Pancreas (tissue), 10 donors: ENCODE measurements at regions of chr19 and their contacts with region 1.

Region 1: GRCh38 chr19:8355631-8356402 is 8.1 kb upstream of the ANGPTL4 start:
- DNase-seq: peak in 1 of 6 donors; percentile 9
- ATAC-seq: peak in 3 of 4 donors; percentile 41 to 70 (median 47)
- H3K4me3 ChIP-seq: no peak overlapping the region
- H3K27ac ChIP-seq: no peak overlapping the region
- H3K4me1 ChIP-seq: peaks cover 0 to 3% (median 0%) of the 10 kb centered on the region in 3 donors
- H3K27me3 ChIP-seq: no peaks in the 10 kb centered on the region
- CTCF ChIP-seq: no peak

Region 2: DNA sequence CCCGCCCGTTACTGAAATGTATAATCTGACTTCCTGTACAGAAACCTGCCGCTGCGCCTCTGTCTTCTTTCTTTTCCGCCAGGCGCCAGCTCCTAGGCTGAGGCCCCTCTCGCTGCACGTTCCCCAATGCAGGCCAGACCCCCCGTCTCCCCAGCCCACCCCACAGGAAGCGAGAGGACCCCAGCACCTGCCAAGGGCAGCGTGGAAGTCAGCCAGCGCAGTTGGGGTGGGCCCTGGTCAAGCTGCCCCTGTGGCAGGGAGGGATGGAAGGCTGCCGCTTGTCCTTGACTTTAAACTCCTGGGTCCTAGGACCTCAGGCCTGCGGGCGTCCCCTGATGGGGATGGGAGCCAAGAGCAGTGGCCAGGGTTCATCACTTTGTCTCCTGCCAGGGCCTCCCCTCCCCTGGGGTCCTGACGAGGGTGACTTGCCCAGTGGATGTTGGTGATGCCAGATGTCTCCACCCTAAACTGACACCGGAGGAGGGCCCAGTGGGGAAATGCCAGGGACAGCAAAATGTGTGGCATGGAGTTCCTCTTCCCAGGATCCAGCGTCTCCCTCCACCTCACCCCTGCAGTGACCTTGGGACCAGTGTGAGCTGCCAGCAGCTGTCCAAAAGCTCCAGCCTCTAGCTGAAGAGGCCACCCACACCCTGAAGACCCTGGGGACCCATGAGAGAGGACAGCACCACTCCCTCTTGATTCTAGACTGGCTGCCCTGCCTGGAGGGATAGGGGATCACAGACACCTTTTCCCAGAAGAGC is 48.8 kb after region 1 on chr19:
- intact Hi-C with region 1: loop called in 2 of 3 experiments (anchors 10 kb)
- DNase-seq: peak in 3 of 6 donors; percentile 41 to 75 (median 42)
- ATAC-seq: peak in 3 of 4 donors; percentile 25 to 78 (median 67)
- H3K4me3 ChIP-seq: no peak overlapping the region
- H3K27ac ChIP-seq: peak overlapping the region in 1 of 4 donors; percentile 34
- H3K4me1 ChIP-seq: no peaks in the 10 kb centered on the region
- H3K27me3 ChIP-seq: no peaks in the 10 kb centered on the region
- CTCF ChIP-seq: no peak

Region 3: DNA sequence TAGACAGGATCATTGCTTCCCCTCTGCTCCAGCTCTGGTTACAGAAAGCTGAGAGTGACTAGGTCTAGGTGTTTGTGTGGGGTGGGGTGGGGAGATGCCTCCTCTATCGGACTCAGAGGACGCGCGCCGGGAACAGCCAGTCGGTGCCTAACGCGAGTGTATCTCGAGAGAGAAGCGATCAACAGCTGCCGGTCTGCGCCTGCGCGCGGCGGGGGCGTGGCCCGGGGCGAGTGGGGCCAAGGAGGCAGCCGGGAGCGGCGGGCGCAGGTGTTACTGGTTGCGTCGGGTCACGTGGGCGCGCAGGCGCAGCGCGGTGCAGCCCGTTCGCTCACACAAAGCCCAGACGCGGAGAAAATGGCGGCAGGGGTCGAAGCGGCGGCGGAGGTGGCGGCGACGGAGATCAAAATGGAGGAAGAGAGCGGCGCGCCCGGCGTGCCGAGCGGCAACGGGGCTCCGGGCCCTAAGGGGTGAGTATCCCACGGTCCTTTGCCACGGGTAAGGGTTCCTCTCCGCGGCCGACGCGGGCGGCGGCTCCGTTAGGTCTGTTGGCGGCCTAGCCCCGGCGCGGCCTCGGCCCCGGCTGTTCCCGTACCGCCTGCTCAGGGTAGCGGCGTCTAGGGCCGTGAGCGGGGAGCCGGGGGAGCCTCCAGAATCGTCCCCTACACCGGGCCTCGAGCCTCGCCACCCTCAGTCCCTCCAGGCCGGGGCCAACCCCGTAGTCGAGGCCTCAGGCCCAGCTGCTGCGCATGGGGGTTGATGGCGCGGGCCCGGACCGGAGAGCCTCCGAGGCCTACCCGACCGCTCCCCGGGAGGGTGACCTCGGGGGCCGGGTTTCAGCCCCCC is 89.0 kb after region 1 on chr19 and contains the start of gene HNRNPM:
- intact Hi-C with region 1: no loop called
- DNase-seq: peak; percentile 99 to 100 (median 100)
- ATAC-seq: peak; percentile 93 to 99 (median 98)
- H3K4me3 ChIP-seq: peak within 1 kb of the TSS; percentile 90 to 99 (median 96)
- H3K27ac ChIP-seq: peak within 1 kb of the TSS; percentile 87 to 96 (median 96)
- H3K4me1 ChIP-seq: peaks cover 25 to 35% (median 27%) of the 10 kb centered on the region in 3 donors
- H3K27me3 ChIP-seq: no peaks in the 10 kb centered on the region
- CTCF ChIP-seq: no peak
- total RNA-seq, gene HNRNPM: 44.5 to 88.3 (median 66.6) TPM

Region 4: GRCh38 chr19:8484331-8484894 is 128.6 kb after region 1 on chr19:
- intact Hi-C with region 1: no loop called
- DNase-seq: peak in 3 of 6 donors; percentile 18 to 50 (median 41)
- ATAC-seq: peak in 1 of 4 donors; percentile 28
- H3K4me3 ChIP-seq: no peak overlapping the region
- H3K27ac ChIP-seq: no peak overlapping the region
- H3K4me1 ChIP-seq: peaks cover 0 to 12% (median 0%) of the 10 kb centered on the region in 3 donors
- H3K27me3 ChIP-seq: no peaks in the 10 kb centered on the region
- CTCF ChIP-seq: no peak

Region 5: GRCh38 chr19:8505680-8506401 is 150.0 kb after region 1 on chr19:
- intact Hi-C with region 1: loop called (anchors 5 to 10 kb)
- DNase-seq: peak; percentile 81 to 96 (median 87)
- ATAC-seq: peak; percentile 89 to 95 (median 92)
- H3K4me3 ChIP-seq: peak overlapping the region; percentile 37 to 64 (median 51)
- H3K27ac ChIP-seq: peak overlapping the region; percentile 19 to 46 (median 36)
- H3K4me1 ChIP-seq: no peaks in the 10 kb centered on the region
- H3K27me3 ChIP-seq: no peaks in the 10 kb centered on the region
- CTCF ChIP-seq: peak; percentile 74 to 86 (median 82)

Region 6: DNA sequence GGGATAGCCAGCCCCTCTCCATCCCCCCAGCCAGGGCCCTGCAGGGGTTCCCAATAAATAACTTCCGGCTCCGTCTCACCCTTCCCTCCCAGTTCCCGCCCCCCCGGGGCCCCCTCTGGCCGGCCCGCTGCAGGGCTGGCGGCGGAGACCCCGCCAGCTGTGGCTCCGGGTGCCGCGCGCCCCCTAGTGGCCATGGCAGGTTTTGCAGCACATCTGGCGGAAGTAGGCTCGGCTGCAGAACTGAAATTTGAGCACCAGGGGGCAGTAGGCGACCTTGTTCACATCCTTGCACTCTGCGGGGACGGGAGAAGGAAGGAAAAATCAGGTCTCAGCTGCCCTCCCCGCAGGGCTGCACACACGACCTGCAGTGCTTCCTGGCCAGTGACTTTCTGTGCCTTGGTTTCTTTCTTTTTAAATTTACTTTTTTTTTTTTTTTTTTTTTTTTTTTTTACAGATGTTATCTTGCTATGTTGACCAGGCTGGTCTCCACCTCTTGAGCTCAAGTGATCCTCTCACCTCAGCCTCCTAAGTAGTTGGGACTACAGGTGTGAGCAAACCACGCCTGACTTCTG is 225.0 kb after region 1 on chr19:
- intact Hi-C with region 1: loop called in 1 of 3 experiments (anchors 10 kb)
- DNase-seq: peak; percentile 59 to 88 (median 78)
- ATAC-seq: peak; percentile 68 to 84 (median 76)
- H3K4me3 ChIP-seq: no peak overlapping the region
- H3K27ac ChIP-seq: no peak overlapping the region
- H3K4me1 ChIP-seq: no peaks in the 10 kb centered on the region
- H3K27me3 ChIP-seq: peaks cover 0 to 5% (median 0%) of the 10 kb centered on the region in 4 donors
- CTCF ChIP-seq: peak; percentile 99